ENCODE measurements at regions of chr14 and their contacts with region 1.

Region 1: DNA sequence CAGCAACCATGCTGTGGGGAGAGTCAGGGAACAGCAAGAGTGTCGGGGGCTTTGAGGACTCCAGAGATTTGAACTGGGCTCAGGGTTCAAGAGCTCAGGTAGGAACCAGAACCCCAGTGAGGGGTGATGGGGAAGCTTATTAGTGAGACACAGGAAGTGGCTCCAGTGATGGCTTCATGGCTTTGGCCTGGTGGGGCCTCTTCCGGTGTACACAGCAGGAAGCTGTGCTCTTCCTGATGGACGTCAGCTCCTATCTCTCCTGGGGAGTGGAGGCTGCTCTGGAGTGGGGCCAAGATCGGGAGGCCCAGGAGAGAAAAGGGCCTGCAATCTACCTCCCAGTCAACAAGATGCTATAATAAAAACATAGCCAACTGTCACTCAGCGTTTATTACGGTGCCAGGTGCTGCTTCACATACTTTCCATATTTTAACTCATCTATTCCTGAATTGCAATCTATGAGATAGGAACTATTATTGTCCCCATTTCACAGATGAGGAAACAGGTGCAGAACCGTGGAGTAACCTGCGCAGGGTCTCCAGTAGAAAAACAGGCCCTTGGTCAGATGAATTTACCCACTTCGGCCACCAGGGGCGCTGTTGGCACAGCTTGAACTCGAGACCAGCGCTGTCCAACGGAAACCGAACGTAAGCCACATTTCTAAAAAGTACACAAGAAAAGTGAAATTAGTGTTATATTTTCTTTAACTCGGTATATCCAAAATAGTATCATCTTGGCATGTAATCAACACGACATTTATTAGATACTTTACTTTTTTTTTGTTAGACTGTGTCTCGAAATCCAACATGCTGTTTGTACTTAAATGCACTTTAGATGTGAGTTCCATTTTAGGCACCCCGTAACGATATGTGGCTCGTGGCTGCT is 63.6 kb upstream of the DLK1 start:
- DNase-seq: peak; percentile 72
- ATAC-seq: no peak
- H3K4me3 ChIP-seq: no peak overlapping the region
- H3K27ac ChIP-seq: no peak overlapping the region
- H3K4me1 ChIP-seq: peaks cover 23% of the 10 kb centered on the region
- H3K27me3 ChIP-seq: no peaks in the 10 kb centered on the region
- CTCF ChIP-seq: peak; percentile 97

Region 2: DNA sequence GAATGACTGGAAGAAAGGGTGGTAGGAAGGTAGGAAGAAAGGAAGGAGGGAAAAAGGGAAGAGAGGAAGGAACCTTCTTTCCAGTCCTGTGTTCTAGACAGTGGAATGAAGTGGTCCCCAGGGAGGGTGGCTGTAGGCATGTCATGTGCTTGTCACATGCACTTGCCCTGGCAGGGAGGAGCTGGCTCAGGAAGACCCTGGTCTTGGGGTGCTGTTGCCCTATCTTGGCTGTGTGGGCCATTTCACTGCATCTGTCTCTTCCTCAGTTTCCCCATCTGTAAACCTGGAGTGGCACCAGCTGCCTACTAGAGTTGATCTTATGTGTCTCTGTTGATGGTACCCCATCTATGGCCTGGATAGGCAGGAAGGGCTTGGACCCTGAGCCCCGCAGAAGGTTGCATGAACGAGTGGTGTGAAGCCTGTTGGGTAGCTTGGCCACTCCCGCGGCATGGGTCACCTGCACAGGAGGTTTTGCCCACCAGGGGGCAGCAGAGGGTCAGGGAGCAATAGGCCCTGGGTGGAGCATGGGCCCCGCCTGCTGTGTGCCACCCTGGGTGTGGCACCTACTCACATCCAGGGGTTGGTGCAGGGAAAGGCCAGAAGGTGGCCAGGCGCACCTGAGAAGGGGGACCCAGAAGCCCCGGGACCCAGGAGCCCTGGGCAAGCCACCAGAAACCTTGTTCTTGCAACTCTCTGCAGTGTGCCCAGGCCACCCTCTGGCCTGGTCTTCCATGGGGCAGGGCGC is 187.9 kb after region 1 on chr14:
- CTCF ChIA-PET with region 1: no interaction called
- POLR2A ChIA-PET with region 1: no interaction called
- intact Hi-C with region 1: loop called (anchors 10 kb)
- DNase-seq: peak; percentile 91
- ATAC-seq: peak; percentile 88
- H3K4me3 ChIP-seq: no peak overlapping the region
- H3K27ac ChIP-seq: no peak overlapping the region
- H3K4me1 ChIP-seq: peaks cover 11% of the 10 kb centered on the region
- H3K27me3 ChIP-seq: no peaks in the 10 kb centered on the region
- CTCF ChIP-seq: peak; percentile 93

Region 3: GRCh38 chr14:100900837-100901390 is 237.8 kb after region 1 on chr14:
- CTCF ChIA-PET with region 1: no interaction called
- POLR2A ChIA-PET with region 1: no interaction called
- intact Hi-C with region 1: loop called (anchors 2 kb)
- DNase-seq: peak; percentile 48
- ATAC-seq: peak; percentile 65
- H3K4me3 ChIP-seq: peak overlapping the region; percentile 56
- H3K27ac ChIP-seq: no peak overlapping the region
- H3K4me1 ChIP-seq: peaks cover 8% of the 10 kb centered on the region
- H3K27me3 ChIP-seq: peaks cover 21% of the 10 kb centered on the region
- CTCF ChIP-seq: peak; percentile 61